K562 (cell line): ENCODE measurements at regions of chr10 and their contacts with region 1.

Region 1: DNA sequence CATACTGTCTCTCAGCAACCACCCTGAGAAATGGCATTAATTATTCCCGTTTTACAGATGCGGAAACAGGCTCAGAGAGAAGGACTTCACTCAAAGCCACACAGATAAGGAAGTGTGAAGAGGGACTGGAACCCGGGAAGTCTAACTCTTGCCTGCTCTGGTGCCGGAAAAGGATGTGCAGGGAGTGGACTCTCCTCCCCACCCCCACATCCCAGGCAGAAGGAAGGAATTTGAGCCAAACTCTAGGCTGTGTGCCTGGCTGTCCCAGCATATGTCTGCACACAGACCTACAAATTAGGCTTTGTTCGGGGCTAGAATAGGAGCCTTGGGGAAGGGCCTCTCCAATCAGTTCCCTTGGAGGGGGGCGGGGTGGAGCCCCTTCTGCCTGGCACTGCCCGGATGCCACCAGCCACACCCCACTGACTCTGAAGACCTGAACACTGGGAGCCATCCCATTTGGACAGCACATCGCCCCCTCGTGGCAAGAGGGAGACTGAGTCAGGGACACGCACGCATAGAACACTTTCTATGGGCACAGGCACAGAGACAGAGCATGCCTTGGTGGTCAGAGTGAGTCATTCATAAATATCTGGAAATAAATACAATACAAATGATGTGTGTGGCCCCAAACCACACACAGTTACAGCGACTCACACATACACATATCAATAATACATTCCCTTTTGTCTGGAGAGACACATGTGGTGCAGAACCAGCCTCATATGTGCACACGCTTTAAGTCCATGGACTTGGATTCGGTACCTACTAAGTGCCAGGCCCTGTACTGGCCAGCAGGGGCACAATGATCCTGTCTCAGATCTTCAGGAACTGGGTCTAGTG is 13.1 kb downstream of the LZTS2 start:
- DNase-seq: peak; percentile 51 to 75 (median 58)
- ATAC-seq: peak; percentile 78
- H3K4me3 ChIP-seq: no peak overlapping the region
- H3K27ac ChIP-seq: no peak overlapping the region
- H3K4me1 ChIP-seq: peaks cover 14 to 38% of the 10 kb centered on the region in 2 experiments; a peak in 4 of 5 replicates
- H3K27me3 ChIP-seq: no peaks in the 10 kb centered on the region
- CTCF ChIP-seq: peak; percentile 69 to 82 (median 72)
- EP300 ChIP-seq: no peak
- POLR2A ChIP-seq: no peak
- RAD21 ChIP-seq: peak; percentile 19 to 56; a peak in 2 of 4 replicates

Region 2: DNA sequence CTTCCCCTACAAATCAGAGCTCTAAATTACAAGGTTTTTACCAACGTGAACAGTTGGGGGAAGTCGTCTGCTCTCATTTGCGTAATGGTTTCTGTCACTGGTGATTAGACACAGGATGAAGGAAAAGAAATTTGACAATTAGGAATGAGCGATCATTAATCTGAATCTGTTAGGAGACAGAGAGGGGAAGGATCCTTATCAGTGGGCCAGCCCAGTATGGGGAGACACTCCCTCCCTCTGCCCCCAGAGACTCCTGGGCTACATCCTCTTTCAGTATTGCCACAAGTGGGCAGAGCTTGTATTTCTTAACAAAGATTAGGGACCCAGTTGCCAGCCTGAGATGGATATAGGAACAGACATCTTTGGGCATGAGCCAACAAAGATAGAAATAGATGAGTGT is 461.5 kb before region 1 on chr10:
- CTCF ChIA-PET with region 1: no interaction called
- POLR2A ChIA-PET with region 1: no interaction called
- in situ Hi-C with region 1: loop called (anchors 10 kb)
- intact Hi-C with region 1: no loop called
- DNase-seq: no peak
- ATAC-seq: no peak
- H3K4me3 ChIP-seq: no peak overlapping the region
- H3K27ac ChIP-seq: no peak overlapping the region
- H3K4me1 ChIP-seq: no peaks in the 10 kb centered on the region
- H3K27me3 ChIP-seq: no peaks in the 10 kb centered on the region
- CTCF ChIP-seq: no peak
- EP300 ChIP-seq: no peak
- POLR2A ChIP-seq: no peak
- RAD21 ChIP-seq: no peak

Region 3: GRCh38 chr10:100993986-100994708 is 18.6 kb before region 1 on chr10:
- CTCF ChIA-PET with region 1: interaction called, 150 read pairs
- POLR2A ChIA-PET with region 1: interaction called, 5 read pairs
- in situ Hi-C with region 1: no loop called
- intact Hi-C with region 1: loop called (anchors 1 kb)
- DNase-seq: peak in 1 of 4 experiments; percentile 28
- ATAC-seq: no peak
- H3K4me3 ChIP-seq: no peak overlapping the region
- H3K27ac ChIP-seq: no peak overlapping the region; the same call in 2 of the 3 replicates
- H3K4me1 ChIP-seq: peaks cover 22 to 43% of the 10 kb centered on the region in 2 experiments; a peak in 4 of 5 replicates
- H3K27me3 ChIP-seq: no peaks in the 10 kb centered on the region
- CTCF ChIP-seq: peak; percentile 41 to 71 (median 65); a peak in 5 of 6 replicates
- EP300 ChIP-seq: no peak
- POLR2A ChIP-seq: no peak
- RAD21 ChIP-seq: peak; percentile 59 to 65

Region 4: GRCh38 chr10:100998991-100999741 is 13.6 kb before region 1 on chr10:
- CTCF ChIA-PET with region 1: interaction called, 150 read pairs
- POLR2A ChIA-PET with region 1: interaction called, 5 read pairs
- in situ Hi-C with region 1: no loop called
- intact Hi-C with region 1: loop called (anchors 1 kb)
- DNase-seq: peak; percentile 55 to 82 (median 71)
- ATAC-seq: peak; percentile 72
- H3K4me3 ChIP-seq: peak overlapping the region; percentile 76
- H3K27ac ChIP-seq: peak overlapping the region; percentile 93
- H3K4me1 ChIP-seq: peaks cover 26 to 81% of the 10 kb centered on the region in 2 experiments; a peak in 4 of 5 replicates
- H3K27me3 ChIP-seq: no peaks in the 10 kb centered on the region
- CTCF ChIP-seq: peak; percentile 62 to 80 (median 69)
- EP300 ChIP-seq: no peak
- POLR2A ChIP-seq: peak; percentile 69
- RAD21 ChIP-seq: peak; percentile 36 to 55; a peak in 3 of 4 replicates

Region 5: GRCh38 chr10:101060036-101060950 is 47.5 kb after region 1 on chr10:
- CTCF ChIA-PET with region 1: no interaction called
- POLR2A ChIA-PET with region 1: no interaction called
- in situ Hi-C with region 1: no loop called
- intact Hi-C with region 1: loop called (anchors 10 kb)
- DNase-seq: peak; percentile 44 to 91 (median 63)
- ATAC-seq: peak; percentile 58
- H3K4me3 ChIP-seq: peak overlapping the region; percentile 53
- H3K27ac ChIP-seq: peak overlapping the region; percentile 100
- H3K4me1 ChIP-seq: peaks cover 34 to 49% of the 10 kb centered on the region in 2 experiments
- H3K27me3 ChIP-seq: no peaks in the 10 kb centered on the region
- CTCF ChIP-seq: peak; percentile 82 to 87 (median 84)
- EP300 ChIP-seq: no peak
- POLR2A ChIP-seq: no peak; the same call in none of the 2 replicates
- RAD21 ChIP-seq: peak; percentile 71 to 82